Right ventricle myocardium superior (tissue), 1 donor: ENCODE measurements at regions of chr3 and their contacts with region 1.

Region 1: DNA sequence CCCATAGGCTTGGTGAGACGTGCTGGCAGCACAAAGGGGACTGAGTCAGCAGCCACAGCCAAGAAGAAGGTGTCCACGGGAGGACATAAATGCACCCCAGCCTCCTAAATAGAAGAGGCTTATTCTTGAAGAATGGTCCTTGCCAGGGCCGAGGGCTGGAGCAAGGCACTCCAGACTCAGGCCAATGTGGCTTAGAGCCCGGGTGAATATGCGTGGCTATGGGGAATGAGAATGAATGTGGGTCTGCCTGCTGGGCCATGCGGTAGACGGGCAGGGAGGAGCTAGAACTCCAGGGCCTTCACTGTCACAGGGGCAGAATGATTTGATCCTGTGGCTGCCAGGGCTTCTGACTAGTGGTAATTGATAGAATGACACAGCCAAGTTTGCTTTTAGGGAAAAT is 34.0 kb downstream of the DHX30 start:
- DNase-seq: no peak
- ATAC-seq: no peak

Region 2: GRCh38 chr3:47989981-47990440 is 153.0 kb after region 1 on chr3:
- intact Hi-C with region 1: loop called (anchors 5 kb)
- DNase-seq: peak; percentile 64
- ATAC-seq: peak; percentile 93

Region 3: GRCh38 chr3:48157950-48158376 is 321.0 kb after region 1 on chr3:
- intact Hi-C with region 1: loop called (anchors 2 kb)
- DNase-seq: peak; percentile 76
- ATAC-seq: peak; percentile 75